Breast epithelium (tissue), 4 donors: ENCODE measurements at regions of chr10 and their contacts with region 1.

Region 1: DNA sequence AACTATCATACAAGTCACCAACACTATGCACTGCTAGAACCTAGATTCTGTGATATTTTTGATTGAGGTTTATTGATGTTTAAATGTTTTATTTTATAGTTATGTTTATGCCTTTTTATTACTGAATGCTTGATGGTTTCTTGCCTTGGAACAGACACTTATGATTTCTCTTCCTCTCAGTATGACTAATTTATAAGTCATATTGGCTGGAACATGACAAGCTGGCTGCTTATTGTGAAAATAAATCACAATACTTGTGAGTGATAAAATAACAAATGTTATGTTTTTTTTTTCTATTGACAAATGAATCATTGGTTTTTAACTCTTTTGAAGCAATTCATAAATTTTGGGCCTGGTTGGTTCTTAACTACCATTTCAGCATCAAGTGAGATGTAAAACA is 142.0 kb upstream of the MALRD1 start:
- DNase-seq: no peak
- H3K4me3 ChIP-seq: no peak overlapping the region
- H3K27ac ChIP-seq: no peak overlapping the region
- H3K4me1 ChIP-seq: no peaks in the 10 kb centered on the region
- H3K27me3 ChIP-seq: no peaks in the 10 kb centered on the region
- CTCF ChIP-seq: no peak
- POLR2A ChIP-seq: no peak

Region 2: DNA sequence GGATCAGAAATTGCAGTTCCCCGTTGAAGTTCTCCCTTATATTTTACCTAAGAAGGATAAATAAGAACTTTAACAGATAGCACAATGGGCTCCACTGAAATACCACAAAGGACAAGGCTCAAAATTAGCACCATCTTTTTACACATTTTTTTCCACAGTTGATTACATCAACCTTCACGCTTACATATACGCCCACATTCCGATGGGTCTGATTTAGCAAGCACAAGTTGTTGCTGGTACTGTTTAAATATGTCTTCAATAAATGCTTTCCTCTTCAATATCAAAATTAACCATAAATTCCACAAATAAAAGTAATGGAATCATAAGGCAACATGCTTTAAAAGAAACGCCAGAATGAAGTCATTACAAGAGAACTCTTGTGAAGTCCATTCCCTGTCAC is 1911.0 kb after region 1 on chr10:
- intact Hi-C with region 1: loop called (anchors 5 kb)
- DNase-seq: no peak
- H3K4me3 ChIP-seq: no peak overlapping the region
- H3K27ac ChIP-seq: no peak overlapping the region
- H3K4me1 ChIP-seq: no peaks in the 10 kb centered on the region
- H3K27me3 ChIP-seq: no peaks in the 10 kb centered on the region
- CTCF ChIP-seq: no peak
- POLR2A ChIP-seq: no peak